ENCODE measurements at regions of chr22 and their contacts with region 1.

Region 1: DNA sequence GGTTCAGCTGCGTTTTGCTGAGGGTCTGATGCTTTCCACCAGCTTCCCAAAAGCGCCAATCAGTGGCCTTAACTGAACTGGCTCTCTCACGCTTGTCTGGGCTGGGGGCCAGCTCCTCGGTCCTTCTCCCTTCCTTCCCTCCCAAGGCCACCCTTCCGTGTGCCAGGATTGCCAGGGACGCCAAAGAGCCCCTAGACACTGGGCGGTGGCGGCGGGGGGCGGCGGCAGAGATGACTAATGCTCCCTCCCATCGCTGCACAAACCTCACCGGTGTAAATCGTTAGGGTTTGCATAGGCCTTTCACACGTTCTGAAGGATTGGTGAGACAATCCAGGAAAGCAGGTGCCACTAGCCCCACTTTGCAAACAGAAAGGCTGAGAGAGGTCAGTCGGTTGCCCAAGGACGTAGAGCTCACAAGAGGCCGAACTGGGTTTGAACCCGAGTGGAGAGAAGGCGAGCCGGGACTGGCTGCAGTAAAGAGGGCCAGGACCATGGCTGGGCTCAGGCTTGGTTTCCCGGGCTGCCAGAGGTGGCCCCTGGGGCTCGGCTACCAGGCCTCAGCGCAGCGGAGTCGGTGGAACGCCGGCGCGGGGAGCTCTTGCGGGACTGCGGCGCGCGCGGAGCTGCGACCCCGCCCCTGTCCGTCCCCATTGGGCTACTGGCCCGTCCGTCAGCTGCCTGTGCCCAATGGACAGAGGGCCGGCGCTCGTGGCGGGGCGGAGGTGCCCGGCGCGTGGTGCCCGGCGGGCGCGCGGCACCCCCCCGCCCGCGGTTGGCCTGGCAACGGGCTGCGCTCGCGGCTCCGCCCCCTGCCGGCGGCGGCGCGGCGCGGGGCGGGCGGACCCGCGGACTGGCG is 589 bp upstream of the GNAZ start:
- DNase-seq: peak; percentile 78 to 96 (median 88)
- ATAC-seq: peak; percentile 97
- H3K4me3 ChIP-seq: peak overlapping the region; percentile 59
- H3K4me3 Mint-ChIP-seq: peak overlapping the region; percentile 92
- H3K27ac ChIP-seq: no peak overlapping the region
- H3K27ac Mint-ChIP-seq: peak overlapping the region; percentile 74
- H3K4me1 ChIP-seq: peaks cover 22% of the 10 kb centered on the region
- H3K4me1 Mint-ChIP-seq: peaks cover 13% of the 10 kb centered on the region
- H3K27me3 ChIP-seq: peaks cover 0 to 6% of the 10 kb centered on the region in 2 experiments
- H3K27me3 Mint-ChIP-seq: peaks cover 17% of the 10 kb centered on the region
- CTCF ChIP-seq: no peak

Region 2: GRCh38 chr22:23128269-23129108 is 58.8 kb after region 1 on chr22:
- CTCF ChIA-PET with region 1: no interaction called
- POLR2A ChIA-PET with region 1: no interaction called
- intact Hi-C with region 1: loop called in 1 of 2 experiments (anchors 5 kb)
- DNase-seq: peak; percentile 59 to 86 (median 70)
- ATAC-seq: peak; percentile 89
- H3K4me3 ChIP-seq: no peak overlapping the region
- H3K4me3 Mint-ChIP-seq: no peak overlapping the region
- H3K27ac ChIP-seq: no peak overlapping the region
- H3K27ac Mint-ChIP-seq: no peak overlapping the region
- H3K4me1 ChIP-seq: peaks cover 7% of the 10 kb centered on the region
- H3K4me1 Mint-ChIP-seq: peaks cover 5% of the 10 kb centered on the region
- H3K27me3 ChIP-seq: no peaks in the 10 kb centered on the region
- H3K27me3 Mint-ChIP-seq: no peaks in the 10 kb centered on the region
- CTCF ChIP-seq: peak; percentile 82

Region 3: GRCh38 chr22:23144932-23145873 is 75.5 kb after region 1 on chr22 and contains the start of gene RAB36:
- CTCF ChIA-PET with region 1: no interaction called
- POLR2A ChIA-PET with region 1: no interaction called
- intact Hi-C with region 1: loop called in 1 of 2 experiments (anchors 2 kb)
- DNase-seq: peak; percentile 70 to 99 (median 90)
- ATAC-seq: peak; percentile 52
- H3K4me3 ChIP-seq: peak within 1 kb of the TSS; percentile 50
- H3K4me3 Mint-ChIP-seq: peak within 1 kb of the TSS; percentile 89
- H3K27ac ChIP-seq: peak within 1 kb of the TSS; percentile 54 to 78
- H3K27ac Mint-ChIP-seq: peak within 1 kb of the TSS; percentile 94
- H3K4me1 ChIP-seq: peaks cover 57% of the 10 kb centered on the region
- H3K4me1 Mint-ChIP-seq: peaks cover 50% of the 10 kb centered on the region
- H3K27me3 ChIP-seq: no peaks in the 10 kb centered on the region
- H3K27me3 Mint-ChIP-seq: no peaks in the 10 kb centered on the region
- CTCF ChIP-seq: no peak
- total RNA-seq, gene RAB36: 0.77 to 0.87 TPM